ENCODE measurements at regions of chr11 and their contacts with region 1.

Region 1: DNA sequence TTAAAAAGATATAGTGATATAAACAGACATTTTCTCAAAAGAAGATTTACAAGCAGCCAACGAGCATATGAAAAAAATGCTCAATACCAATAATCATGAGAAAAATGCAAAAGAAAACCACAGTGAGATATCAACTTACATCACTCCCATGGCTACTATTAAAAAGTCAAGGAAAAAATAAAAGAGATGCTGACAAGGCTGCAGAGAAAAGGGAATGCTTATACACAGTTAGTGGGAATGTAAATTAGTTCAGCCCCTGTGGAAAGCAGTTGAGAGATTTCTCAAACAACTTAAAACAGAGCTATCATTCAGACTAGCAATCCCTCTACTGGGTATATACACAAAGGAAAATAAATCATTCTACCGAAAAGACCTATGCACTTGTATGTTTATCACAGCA is 97.1 kb upstream of the CARD18 start:
- DNase-seq: peak; percentile 84
- ATAC-seq: peak; percentile 90
- H3K4me3 ChIP-seq: no peak overlapping the region
- H3K27ac ChIP-seq: no peak overlapping the region
- H3K4me1 ChIP-seq: peaks cover 4% of the 10 kb centered on the region; the same call in 1 of the 2 replicates
- H3K27me3 ChIP-seq: no peaks in the 10 kb centered on the region
- CTCF ChIP-seq: no peak
- POLR2A ChIP-seq: no peak
- RAD21 ChIP-seq: no peak

Region 2: DNA sequence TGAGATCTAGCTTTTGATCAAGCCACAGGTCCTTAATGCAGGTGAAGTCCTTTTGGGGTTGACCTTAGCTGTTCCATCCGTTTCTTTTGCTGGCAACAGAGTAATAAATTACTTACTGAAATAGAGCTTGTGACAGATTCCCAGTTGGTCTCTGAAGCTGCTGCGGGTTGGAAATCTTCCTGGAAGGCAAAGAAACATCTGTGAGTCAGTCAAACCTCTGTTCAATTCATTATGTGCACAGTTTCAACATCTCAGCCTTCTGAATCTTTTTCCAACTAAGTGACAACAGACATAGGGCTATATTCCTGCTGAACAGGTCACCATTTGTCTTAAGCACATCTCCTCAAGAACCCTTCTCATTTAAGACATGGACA is 1289.1 kb before region 1 on chr11:
- CTCF ChIA-PET with region 1: no interaction called
- POLR2A ChIA-PET with region 1: no interaction called
- dilution Hi-C with region 1: no loop called
- in situ Hi-C with region 1: no loop called
- intact Hi-C with region 1: loop called (anchors 10 kb)
- DNase-seq: peak; percentile 58
- ATAC-seq: peak; percentile 29; the same call in 1 of the 2 replicates
- H3K4me3 ChIP-seq: no peak overlapping the region
- H3K27ac ChIP-seq: no peak overlapping the region
- H3K4me1 ChIP-seq: peaks cover 5% of the 10 kb centered on the region
- H3K27me3 ChIP-seq: no peaks in the 10 kb centered on the region
- CTCF ChIP-seq: no peak
- POLR2A ChIP-seq: no peak
- RAD21 ChIP-seq: no peak

Region 3: DNA sequence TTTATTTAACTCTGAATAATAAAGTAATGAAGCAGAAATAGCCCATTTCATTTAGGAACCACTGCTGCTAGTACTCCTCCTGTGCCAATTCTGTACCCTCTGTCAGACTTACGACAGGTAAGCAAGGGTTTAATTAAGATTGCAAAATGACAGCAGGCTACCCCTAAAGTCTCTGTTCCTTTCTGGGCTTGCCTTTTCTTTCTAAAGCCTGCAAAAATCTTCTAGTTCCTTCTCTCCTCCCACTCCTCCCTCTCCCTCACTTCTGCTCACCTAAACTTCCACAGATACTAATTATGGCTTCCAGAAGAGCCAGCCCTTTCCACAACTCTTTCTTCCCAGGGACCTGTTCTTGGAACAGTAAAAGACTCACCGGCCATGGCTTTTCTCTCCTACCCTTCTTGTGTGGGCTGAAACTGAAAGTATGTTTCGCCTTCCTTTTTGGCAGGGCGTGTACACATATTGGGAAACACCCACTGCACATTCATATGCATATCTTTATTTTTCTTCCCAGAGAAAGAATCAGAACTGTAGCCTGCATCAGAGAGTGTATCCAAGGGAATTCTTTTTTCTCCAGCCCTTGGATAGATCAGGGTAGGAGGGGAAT is 191.6 kb before region 1 on chr11 and contains the start of gene CARD16:
- CTCF ChIA-PET with region 1: no interaction called
- POLR2A ChIA-PET with region 1: no interaction called
- dilution Hi-C with region 1: no loop called
- in situ Hi-C with region 1: no loop called
- intact Hi-C with region 1: loop called (anchors 2 kb)
- DNase-seq: peak; percentile 81
- ATAC-seq: peak; percentile 37
- H3K4me3 ChIP-seq: peak within 1 kb of the TSS; percentile 82
- H3K27ac ChIP-seq: peak within 1 kb of the TSS; percentile 96
- H3K4me1 ChIP-seq: peaks cover 9% of the 10 kb centered on the region
- H3K27me3 ChIP-seq: no peaks in the 10 kb centered on the region
- CTCF ChIP-seq: no peak
- POLR2A ChIP-seq: no peak
- RAD21 ChIP-seq: no peak
- total RNA-seq, gene CARD16: 7.9 and 23.3 TPM in 2 replicates